ENCODE measurements at regions of chr12 and their contacts with region 1.

Region 1: DNA sequence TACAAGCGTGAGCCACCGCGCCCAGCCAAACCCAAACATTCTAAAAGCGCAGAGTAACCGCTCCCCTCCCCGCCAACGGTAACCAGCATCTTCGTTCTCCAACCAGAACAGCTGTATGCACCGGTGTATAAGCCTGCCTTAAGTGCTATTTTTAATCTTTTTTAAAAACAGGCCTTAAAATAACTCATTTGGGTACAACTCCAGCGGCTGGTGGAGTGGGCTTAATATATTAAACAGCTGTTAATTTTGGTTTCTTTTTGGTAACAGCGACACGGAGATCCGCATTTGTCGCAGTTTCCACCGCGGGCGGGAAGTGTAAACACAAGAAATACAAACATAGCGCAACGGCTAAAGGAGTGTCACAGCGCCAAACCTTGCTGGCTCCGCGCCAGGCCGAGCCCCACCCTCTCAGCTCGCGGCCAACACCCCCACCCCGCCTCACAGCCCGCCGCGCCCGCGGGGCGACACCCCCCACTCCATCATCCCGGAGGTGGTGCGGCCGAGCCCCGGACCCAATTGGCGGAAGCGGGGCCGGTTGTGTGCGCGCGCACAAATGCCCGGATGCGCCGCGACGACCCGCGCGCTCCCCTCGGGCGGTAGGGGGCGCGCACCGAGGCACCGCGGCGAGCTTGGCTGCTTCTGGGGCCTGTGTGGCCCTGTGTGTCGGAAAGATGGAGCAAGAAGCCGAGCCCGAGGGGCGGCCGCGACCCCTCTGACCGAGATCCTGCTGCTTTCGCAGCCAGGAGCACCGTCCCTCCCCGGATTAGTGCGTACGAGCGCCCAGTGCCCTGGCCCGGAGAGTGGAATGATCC is at the start of gene MDM2:
- DNase-seq: peak; percentile 99
- H3K4me3 Mint-ChIP-seq: peak within 1 kb of the TSS; percentile 98
- H3K27ac Mint-ChIP-seq: peak within 1 kb of the TSS; percentile 100
- H3K4me1 Mint-ChIP-seq: peaks cover 50% of the 10 kb centered on the region
- H3K27me3 Mint-ChIP-seq: no peaks in the 10 kb centered on the region
- total RNA-seq, gene MDM2: 194 to 201 TPM

Region 2: GRCh38 chr12:68331869-68332727 is 475.7 kb before region 1 on chr12 and contains the start of gene MDM1:
- CTCF ChIA-PET with region 1: interaction called, 4 read pairs
- POLR2A ChIA-PET with region 1: interaction called, 14 read pairs
- DNase-seq: peak; percentile 95
- H3K4me3 Mint-ChIP-seq: peak within 1 kb of the TSS; percentile 87
- H3K27ac Mint-ChIP-seq: peak within 1 kb of the TSS; percentile 65
- H3K4me1 Mint-ChIP-seq: peaks cover 42% of the 10 kb centered on the region
- H3K27me3 Mint-ChIP-seq: peaks cover 11% of the 10 kb centered on the region
- total RNA-seq, gene MDM1: 21.8 to 24.4 TPM

Region 3: GRCh38 chr12:68374307-68374982 is 433.3 kb before region 1 on chr12:
- CTCF ChIA-PET with region 1: interaction called, 7 read pairs
- POLR2A ChIA-PET with region 1: interaction called, 11 read pairs
- DNase-seq: peak; percentile 82
- H3K4me3 Mint-ChIP-seq: peak overlapping the region; percentile 46
- H3K27ac Mint-ChIP-seq: peak overlapping the region; percentile 96
- H3K4me1 Mint-ChIP-seq: peaks cover 61% of the 10 kb centered on the region
- H3K27me3 Mint-ChIP-seq: no peaks in the 10 kb centered on the region

Region 4: GRCh38 chr12:68686595-68687521 is 120.9 kb before region 1 on chr12 and contains the start of gene NUP107:
- CTCF ChIA-PET with region 1: interaction called, 8 read pairs
- POLR2A ChIA-PET with region 1: interaction called, 18 read pairs
- DNase-seq: peak; percentile 97
- H3K4me3 Mint-ChIP-seq: peak within 1 kb of the TSS; percentile 96
- H3K27ac Mint-ChIP-seq: peak within 1 kb of the TSS; percentile 92
- H3K4me1 Mint-ChIP-seq: peaks cover 45% of the 10 kb centered on the region
- H3K27me3 Mint-ChIP-seq: no peaks in the 10 kb centered on the region
- total RNA-seq, gene NUP107: 80.7 to 85.4 TPM

Region 5: DNA sequence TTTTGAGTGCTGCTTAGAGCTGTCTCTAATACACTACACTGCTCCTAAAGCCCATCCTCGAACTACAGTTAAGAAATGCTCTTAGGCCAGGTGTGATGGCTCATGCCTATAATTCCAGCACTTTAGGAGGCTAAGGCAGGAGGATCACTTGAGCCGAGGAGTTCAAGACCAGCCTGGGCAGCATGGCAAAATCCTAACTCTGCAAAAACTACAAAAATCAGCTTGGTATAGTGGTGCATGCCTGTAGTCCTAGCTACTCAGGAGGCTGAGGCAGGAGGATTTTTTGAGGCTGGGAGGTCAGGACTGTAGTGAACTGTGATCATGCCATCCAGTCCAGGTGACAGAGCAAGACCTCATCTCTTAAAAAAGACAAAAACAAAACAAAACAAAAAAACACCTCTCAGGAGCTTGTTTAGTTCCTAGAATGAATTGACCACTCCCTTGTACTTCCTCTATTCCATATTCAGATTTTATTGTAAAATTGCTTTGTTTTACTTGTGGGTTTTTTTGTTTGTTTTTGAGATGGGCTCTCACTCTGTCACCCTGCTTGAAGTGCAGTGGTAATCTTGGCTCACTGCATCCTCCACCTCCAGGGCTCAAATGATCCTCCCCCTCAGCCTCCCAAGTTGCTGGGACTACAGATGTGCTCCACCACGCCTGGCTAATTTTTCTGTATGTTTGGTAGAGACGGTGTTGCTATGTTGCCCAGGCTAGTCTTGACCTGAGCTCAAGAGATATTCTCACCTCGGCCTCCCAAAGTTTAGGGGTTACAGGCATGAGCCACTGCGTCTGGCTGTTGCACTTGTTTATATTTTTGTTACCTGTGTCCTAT is 13.8 kb after region 1 on chr12:
- CTCF ChIA-PET with region 1: interaction called, 30 read pairs
- POLR2A ChIA-PET with region 1: interaction called, 33 read pairs
- DNase-seq: no peak
- H3K4me3 Mint-ChIP-seq: no peak overlapping the region
- H3K27ac Mint-ChIP-seq: peak overlapping the region; percentile 52
- H3K4me1 Mint-ChIP-seq: peaks cover 48% of the 10 kb centered on the region
- H3K27me3 Mint-ChIP-seq: no peaks in the 10 kb centered on the region

Region 6: DNA sequence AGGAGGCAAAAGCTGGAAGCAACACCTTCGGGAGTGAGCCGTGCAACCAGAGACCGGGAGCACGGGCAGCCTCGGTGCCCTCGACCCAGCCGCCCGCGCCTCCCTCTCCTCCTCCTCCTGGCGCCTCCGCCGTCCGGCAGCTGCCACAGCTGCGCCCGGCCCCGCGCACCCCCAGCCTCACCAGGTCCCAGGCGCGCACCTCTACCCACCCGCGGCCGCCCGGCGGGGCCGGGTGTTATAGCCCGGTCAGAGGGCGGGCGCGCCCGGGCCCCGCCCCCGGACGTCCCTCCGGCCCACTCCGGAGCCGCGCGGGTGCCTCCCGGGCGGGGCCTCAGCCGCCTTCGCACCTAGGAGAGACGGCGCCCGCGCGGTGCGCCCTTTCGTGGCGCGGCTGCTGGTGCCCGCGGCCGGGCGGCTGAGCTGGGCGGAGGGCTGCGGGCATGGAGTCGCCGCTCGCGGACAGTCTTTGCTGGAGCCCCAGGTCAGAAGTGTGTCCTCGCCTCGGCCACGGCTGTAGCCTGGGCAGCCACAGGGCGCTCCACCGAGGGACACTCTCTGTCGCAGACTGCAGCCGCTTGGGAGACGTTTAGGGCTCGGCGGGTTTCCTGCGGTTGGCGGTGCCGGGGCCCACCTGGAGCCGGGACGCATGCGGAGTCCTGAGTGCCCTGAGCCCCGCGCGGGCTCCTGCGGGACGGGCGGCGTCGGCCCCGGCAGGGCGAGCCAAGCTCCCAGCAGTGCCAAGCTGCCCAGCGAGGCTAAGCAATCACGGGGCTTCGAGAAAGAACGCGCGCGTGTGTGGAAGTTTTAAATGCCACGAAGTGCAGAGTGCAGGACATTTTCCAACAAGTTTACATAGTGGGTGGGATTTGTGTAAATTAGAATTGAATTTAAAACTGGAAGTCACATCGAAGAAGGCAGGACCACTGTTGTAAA is 125.4 kb after region 1 on chr12 and contains the start of gene CPM:
- CTCF ChIA-PET with region 1: no interaction called
- POLR2A ChIA-PET with region 1: no interaction called
- DNase-seq: peak; percentile 78
- H3K4me3 Mint-ChIP-seq: peak within 1 kb of the TSS; percentile 75
- H3K27ac Mint-ChIP-seq: no peak within 1 kb of the TSS
- H3K4me1 Mint-ChIP-seq: peaks cover 14% of the 10 kb centered on the region
- H3K27me3 Mint-ChIP-seq: peaks cover 29% of the 10 kb centered on the region
- total RNA-seq, gene CPM: 1.1 to 1.4 TPM